SK-N-SH (cell line): ENCODE measurements at regions of chr3 and their contacts with region 1.

Region 1: GRCh38 chr3:56342475-56342874 is 125.8 kb downstream of the ERC2 start:
- DNase-seq: no peak
- H3K4me3 ChIP-seq: no peak overlapping the region
- H3K27ac ChIP-seq: no peak overlapping the region
- H3K4me1 ChIP-seq: peaks cover 0 to 12% of the 10 kb centered on the region in 2 experiments; a peak in 1 of 4 replicates
- H3K27me3 ChIP-seq: no peaks in the 10 kb centered on the region
- CTCF ChIP-seq: no peak
- EP300 ChIP-seq: no peak
- RAD21 ChIP-seq: no peak

Region 2: DNA sequence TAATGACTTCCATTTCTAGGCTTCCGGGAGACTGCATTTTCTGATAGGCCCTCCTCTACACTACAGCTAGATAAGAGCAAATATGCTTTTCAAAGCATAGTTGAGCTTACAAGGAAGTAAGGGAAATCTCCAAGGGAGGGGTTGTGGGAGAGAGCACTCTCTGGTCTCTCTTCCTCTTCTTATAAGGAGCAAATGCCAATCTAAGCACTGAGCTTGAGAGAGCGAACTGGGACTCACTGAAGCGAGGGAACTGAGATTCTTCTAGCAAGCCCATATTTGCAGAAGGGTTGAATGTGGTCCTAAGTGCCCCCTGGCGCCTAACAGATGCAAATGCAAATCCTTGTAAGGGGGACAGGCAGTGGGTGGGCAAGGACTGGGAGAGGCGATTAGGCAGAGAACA is 39.0 kb before region 1 on chr3:
- CTCF ChIA-PET with region 1: interaction called, 12 read pairs
- POLR2A ChIA-PET with region 1: no interaction called
- DNase-seq: peak; percentile 54
- H3K4me3 ChIP-seq: peak overlapping the region in 1 of 2 experiments; percentile 20; a peak in 1 of 4 replicates
- H3K27ac ChIP-seq: no peak overlapping the region
- H3K4me1 ChIP-seq: peaks cover 0 to 4% of the 10 kb centered on the region in 2 experiments; a peak in 2 of 4 replicates
- H3K27me3 ChIP-seq: no peaks in the 10 kb centered on the region
- CTCF ChIP-seq: peak; percentile 62
- EP300 ChIP-seq: no peak
- RAD21 ChIP-seq: peak; percentile 74

Region 3: DNA sequence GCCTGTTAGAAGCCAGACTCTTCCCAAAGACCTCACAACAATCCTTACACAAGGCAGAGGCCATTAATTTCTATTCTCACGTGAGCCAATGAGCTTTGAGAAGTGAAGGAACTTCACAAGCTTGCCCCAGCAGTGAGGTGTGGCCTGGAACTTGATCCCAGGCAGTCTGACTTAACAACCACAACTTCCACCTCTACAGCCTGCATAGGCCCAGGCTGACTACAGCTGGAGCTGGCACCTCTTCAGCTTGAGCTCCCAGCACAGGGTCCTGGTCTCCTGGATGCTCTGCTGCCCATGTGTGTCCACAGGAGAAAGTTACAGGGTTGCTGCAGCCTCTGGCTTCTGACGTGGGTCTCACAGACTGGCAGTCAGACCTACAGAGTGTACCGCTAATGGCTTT is 14.8 kb after region 1 on chr3:
- CTCF ChIA-PET with region 1: interaction called, 39 read pairs
- POLR2A ChIA-PET with region 1: no interaction called
- DNase-seq: no peak
- H3K4me3 ChIP-seq: no peak overlapping the region
- H3K27ac ChIP-seq: no peak overlapping the region
- H3K4me1 ChIP-seq: no peaks in the 10 kb centered on the region
- H3K27me3 ChIP-seq: no peaks in the 10 kb centered on the region
- CTCF ChIP-seq: no peak
- EP300 ChIP-seq: no peak
- RAD21 ChIP-seq: no peak

Region 4: DNA sequence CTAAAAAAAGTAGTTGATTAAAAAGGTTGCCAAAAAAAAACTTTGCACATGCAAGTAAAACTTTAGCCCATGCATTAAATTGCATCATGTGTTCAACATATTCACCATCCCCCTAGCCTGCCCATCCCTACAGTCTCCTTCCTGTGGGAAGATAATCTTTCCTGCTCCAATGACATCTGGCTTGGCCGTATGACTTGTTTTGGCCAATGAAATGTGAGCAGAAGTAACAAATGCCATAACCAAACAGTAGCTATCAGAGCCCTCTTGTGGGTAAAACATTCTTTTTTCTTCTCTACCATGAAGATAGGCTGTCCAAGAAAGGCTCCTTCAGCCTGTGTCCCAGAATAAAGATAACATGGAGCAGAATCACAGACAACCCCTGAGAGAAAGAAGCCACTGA is 110.5 kb after region 1 on chr3:
- CTCF ChIA-PET with region 1: interaction called, 81 read pairs
- POLR2A ChIA-PET with region 1: no interaction called
- DNase-seq: no peak
- H3K4me3 ChIP-seq: no peak overlapping the region
- H3K27ac ChIP-seq: no peak overlapping the region
- H3K4me1 ChIP-seq: no peaks in the 10 kb centered on the region; a peak in 1 of 4 replicates
- H3K27me3 ChIP-seq: no peaks in the 10 kb centered on the region
- CTCF ChIP-seq: no peak
- EP300 ChIP-seq: no peak
- RAD21 ChIP-seq: no peak

Region 5: GRCh38 chr3:56484122-56484521 is 141.6 kb after region 1 on chr3:
- CTCF ChIA-PET with region 1: interaction called, 10 read pairs
- POLR2A ChIA-PET with region 1: no interaction called
- DNase-seq: no peak
- H3K4me3 ChIP-seq: no peak overlapping the region
- H3K27ac ChIP-seq: no peak overlapping the region
- H3K4me1 ChIP-seq: no peaks in the 10 kb centered on the region
- H3K27me3 ChIP-seq: no peaks in the 10 kb centered on the region; the same call in 1 of the 2 replicates
- CTCF ChIP-seq: no peak
- EP300 ChIP-seq: no peak
- RAD21 ChIP-seq: no peak

Region 6: GRCh38 chr3:56725175-56725574 is 382.7 kb after region 1 on chr3:
- CTCF ChIA-PET with region 1: no interaction called
- POLR2A ChIA-PET with region 1: no interaction called
- DNase-seq: no peak
- H3K4me3 ChIP-seq: no peak overlapping the region
- H3K27ac ChIP-seq: no peak overlapping the region
- H3K4me1 ChIP-seq: no peaks in the 10 kb centered on the region
- H3K27me3 ChIP-seq: no peaks in the 10 kb centered on the region
- CTCF ChIP-seq: no peak
- EP300 ChIP-seq: no peak
- RAD21 ChIP-seq: no peak